HCT116 (cell line): ENCODE measurements at regions of chr3 and their contacts with region 1.

Region 1: GRCh38 chr3:99499235-99500158 is 138.9 kb upstream of the COL8A1 start:
- DNase-seq: peak; percentile 21
- ATAC-seq: peak; percentile 84
- H3K4me3 ChIP-seq: no peak overlapping the region
- H3K27ac ChIP-seq: no peak overlapping the region
- H3K4me1 ChIP-seq: no peaks in the 10 kb centered on the region
- H3K27me3 ChIP-seq: peaks cover 15% of the 10 kb centered on the region
- CTCF ChIP-seq: peak; percentile 47 to 80 (median 75); a peak in 5 of 6 replicates
- POLR2A ChIP-seq: no peak
- RAD21 ChIP-seq: peak; percentile 45

Region 2: GRCh38 chr3:99532246-99532645 is 32.7 kb after region 1 on chr3:
- CTCF ChIA-PET with region 1: interaction called, 14 read pairs
- POLR2A ChIA-PET with region 1: no interaction called
- RAD21 ChIA-PET with region 1: interaction called in 1 of 2 experiments, 3 read pairs
- intact Hi-C with region 1: no loop called
- DNase-seq: peak; percentile 31
- ATAC-seq: peak; percentile 99
- H3K4me3 ChIP-seq: no peak overlapping the region
- H3K27ac ChIP-seq: no peak overlapping the region
- H3K4me1 ChIP-seq: no peaks in the 10 kb centered on the region
- H3K27me3 ChIP-seq: peaks cover 58% of the 10 kb centered on the region
- CTCF ChIP-seq: peak; percentile 42 to 82 (median 76); a peak in 5 of 6 replicates
- POLR2A ChIP-seq: no peak
- RAD21 ChIP-seq: peak; percentile 61

Region 3: GRCh38 chr3:99686955-99687612 is 187.6 kb after region 1 on chr3:
- CTCF ChIA-PET with region 1: interaction called, 6 read pairs
- POLR2A ChIA-PET with region 1: no interaction called
- RAD21 ChIA-PET with region 1: no interaction called
- intact Hi-C with region 1: loop called (anchors 5 kb)
- DNase-seq: peak; percentile 51
- ATAC-seq: peak; percentile 95
- H3K4me3 ChIP-seq: no peak overlapping the region
- H3K27ac ChIP-seq: no peak overlapping the region
- H3K4me1 ChIP-seq: no peaks in the 10 kb centered on the region
- H3K27me3 ChIP-seq: peaks cover 49% of the 10 kb centered on the region
- CTCF ChIP-seq: peak; percentile 40 to 71 (median 70); a peak in 5 of 6 replicates
- POLR2A ChIP-seq: no peak
- RAD21 ChIP-seq: peak; percentile 67

Region 4: DNA sequence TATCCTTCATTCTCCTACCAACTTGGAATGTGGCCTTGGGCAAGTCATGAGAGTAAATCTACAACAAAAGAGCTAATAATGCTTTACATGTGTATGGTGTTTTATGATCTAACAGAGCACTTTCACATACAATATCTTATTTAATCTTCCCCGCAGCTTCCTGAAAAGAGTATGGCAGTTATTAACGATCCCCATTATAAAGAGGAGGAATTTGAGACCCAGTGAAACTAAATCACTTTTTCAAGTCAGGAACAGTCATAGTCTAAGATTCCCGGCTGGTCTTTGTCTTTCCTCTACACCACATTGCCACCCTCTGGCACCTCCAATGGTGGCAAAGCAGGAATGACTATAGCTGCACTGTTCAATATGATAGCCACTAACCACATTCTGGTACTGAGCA is 248.4 kb after region 1 on chr3:
- CTCF ChIA-PET with region 1: interaction called, 19 read pairs
- POLR2A ChIA-PET with region 1: no interaction called
- RAD21 ChIA-PET with region 1: interaction called in 1 of 2 experiments, 4 read pairs
- intact Hi-C with region 1: loop called (anchors 1 kb)
- DNase-seq: peak; percentile 6
- ATAC-seq: peak; percentile 93
- H3K4me3 ChIP-seq: no peak overlapping the region
- H3K27ac ChIP-seq: no peak overlapping the region
- H3K4me1 ChIP-seq: no peaks in the 10 kb centered on the region
- H3K27me3 ChIP-seq: peaks cover 38% of the 10 kb centered on the region
- CTCF ChIP-seq: peak; percentile 9 to 40 (median 39); a peak in 4 of 6 replicates
- POLR2A ChIP-seq: no peak
- RAD21 ChIP-seq: peak; percentile 52

Region 5: GRCh38 chr3:99753268-99753975 is 253.9 kb after region 1 on chr3:
- CTCF ChIA-PET with region 1: interaction called, 19 read pairs
- POLR2A ChIA-PET with region 1: no interaction called
- RAD21 ChIA-PET with region 1: interaction called in 1 of 2 experiments, 4 read pairs
- intact Hi-C with region 1: loop called (anchors 1 kb)
- DNase-seq: peak; percentile 28
- ATAC-seq: peak; percentile 92
- H3K4me3 ChIP-seq: no peak overlapping the region
- H3K27ac ChIP-seq: no peak overlapping the region
- H3K4me1 ChIP-seq: no peaks in the 10 kb centered on the region
- H3K27me3 ChIP-seq: peaks cover 66% of the 10 kb centered on the region
- CTCF ChIP-seq: peak; percentile 37 to 76 (median 68); a peak in 5 of 6 replicates
- POLR2A ChIP-seq: no peak
- RAD21 ChIP-seq: peak; percentile 76